GM10248 (cell line): ENCODE measurements at regions of chr7 and their contacts with region 1.

Region 1: GRCh38 chr7:64951250-64951848 is 39.5 kb downstream of the ZNF117 start:
- DNase-seq: peak; percentile 46
- CTCF ChIP-seq: peak; percentile 70

Region 2: GRCh38 chr7:64938540-64938939 is 12.8 kb before region 1 on chr7:
- CTCF ChIA-PET with region 1: interaction called, 10 read pairs
- POLR2A ChIA-PET with region 1: no interaction called
- DNase-seq: no peak
- CTCF ChIP-seq: no peak

Region 3: GRCh38 chr7:65216459-65216858 is 265.1 kb after region 1 on chr7:
- CTCF ChIA-PET with region 1: interaction called, 13 read pairs
- POLR2A ChIA-PET with region 1: no interaction called
- DNase-seq: peak; percentile 32
- CTCF ChIP-seq: peak; percentile 70